ENCODE measurements at regions of chr2 and their contacts with region 1.

Region 1: GRCh38 chr2:70142590-70143313 is 48.1 kb downstream of the C2orf42 start:
- DNase-seq: peak; percentile 99 to 100 (median 100)
- ATAC-seq: peak; percentile 73
- H3K4me3 ChIP-seq: peak overlapping the region; percentile 54 to 56
- H3K4me3 Mint-ChIP-seq: peak overlapping the region; percentile 91
- H3K27ac ChIP-seq: peak overlapping the region; percentile 89 to 97
- H3K27ac Mint-ChIP-seq: peak overlapping the region; percentile 100
- H3K4me1 ChIP-seq: peaks cover 49% of the 10 kb centered on the region
- H3K4me1 Mint-ChIP-seq: peaks cover 53% of the 10 kb centered on the region
- H3K27me3 ChIP-seq: no peaks in the 10 kb centered on the region
- H3K27me3 Mint-ChIP-seq: no peaks in the 10 kb centered on the region
- CTCF ChIP-seq: peak; percentile 89

Region 2: GRCh38 chr2:69829256-69830046 is 313.3 kb before region 1 on chr2 and contains the start of gene GMCL1:
- CTCF ChIA-PET with region 1: no interaction called
- POLR2A ChIA-PET with region 1: no interaction called
- intact Hi-C with region 1: loop called in 1 of 2 experiments (anchors 1 kb)
- DNase-seq: peak; percentile 96 to 100 (median 99)
- ATAC-seq: peak; percentile 94
- H3K4me3 ChIP-seq: peak within 1 kb of the TSS; percentile 70 to 75
- H3K4me3 Mint-ChIP-seq: peak within 1 kb of the TSS; percentile 96
- H3K27ac ChIP-seq: peak within 1 kb of the TSS; percentile 89 to 95
- H3K27ac Mint-ChIP-seq: peak within 1 kb of the TSS; percentile 96
- H3K4me1 ChIP-seq: peaks cover 36% of the 10 kb centered on the region
- H3K4me1 Mint-ChIP-seq: peaks cover 54% of the 10 kb centered on the region
- H3K27me3 ChIP-seq: no peaks in the 10 kb centered on the region
- H3K27me3 Mint-ChIP-seq: no peaks in the 10 kb centered on the region
- CTCF ChIP-seq: no peak
- total RNA-seq, gene GMCL1: 37.1 to 41.4 TPM

Region 3: GRCh38 chr2:70070541-70071268 is 72.0 kb before region 1 on chr2:
- CTCF ChIA-PET with region 1: interaction called, 19 read pairs
- POLR2A ChIA-PET with region 1: interaction called, 15 read pairs
- intact Hi-C with region 1: loop called (anchors 1 kb)
- DNase-seq: peak; percentile 32 to 91 (median 59)
- ATAC-seq: peak; percentile 73
- H3K4me3 ChIP-seq: peak overlapping the region in 1 of 2 experiments; percentile 17
- H3K4me3 Mint-ChIP-seq: peak overlapping the region; percentile 74
- H3K27ac ChIP-seq: peak overlapping the region; percentile 12 to 87
- H3K27ac Mint-ChIP-seq: peak overlapping the region; percentile 97
- H3K4me1 ChIP-seq: peaks cover 42% of the 10 kb centered on the region
- H3K4me1 Mint-ChIP-seq: peaks cover 49% of the 10 kb centered on the region
- H3K27me3 ChIP-seq: no peaks in the 10 kb centered on the region
- H3K27me3 Mint-ChIP-seq: no peaks in the 10 kb centered on the region
- CTCF ChIP-seq: peak; percentile 87

Region 4: GRCh38 chr2:70104231-70105111 is 38.3 kb before region 1 on chr2:
- CTCF ChIA-PET with region 1: interaction called, 3 read pairs
- POLR2A ChIA-PET with region 1: interaction called, 7 read pairs
- intact Hi-C with region 1: loop called (anchors 1 to 5 kb)
- DNase-seq: peak in 3 of 9 experiments; percentile 30 to 61 (median 44)
- ATAC-seq: no peak
- H3K4me3 ChIP-seq: peak overlapping the region; percentile 29 to 44
- H3K4me3 Mint-ChIP-seq: peak overlapping the region; percentile 80
- H3K27ac ChIP-seq: peak overlapping the region; percentile 59 to 85
- H3K27ac Mint-ChIP-seq: peak overlapping the region; percentile 96
- H3K4me1 ChIP-seq: peaks cover 52% of the 10 kb centered on the region
- H3K4me1 Mint-ChIP-seq: peaks cover 50% of the 10 kb centered on the region
- H3K27me3 ChIP-seq: no peaks in the 10 kb centered on the region
- H3K27me3 Mint-ChIP-seq: no peaks in the 10 kb centered on the region
- CTCF ChIP-seq: no peak

Region 5: GRCh38 chr2:70132244-70133126 is 10.3 kb before region 1 on chr2:
- CTCF ChIA-PET with region 1: interaction called, 19 read pairs
- POLR2A ChIA-PET with region 1: interaction called, 183 read pairs
- intact Hi-C with region 1: loop called in 1 of 2 experiments (anchors 1 kb)
- DNase-seq: peak in 6 of 9 experiments; percentile 48 to 78 (median 60)
- ATAC-seq: peak; percentile 53
- H3K4me3 ChIP-seq: peak overlapping the region; percentile 29 to 49
- H3K4me3 Mint-ChIP-seq: peak overlapping the region; percentile 91
- H3K27ac ChIP-seq: peak overlapping the region; percentile 62 to 90
- H3K27ac Mint-ChIP-seq: peak overlapping the region; percentile 98
- H3K4me1 ChIP-seq: peaks cover 74% of the 10 kb centered on the region
- H3K4me1 Mint-ChIP-seq: peaks cover 75% of the 10 kb centered on the region
- H3K27me3 ChIP-seq: no peaks in the 10 kb centered on the region
- H3K27me3 Mint-ChIP-seq: no peaks in the 10 kb centered on the region
- CTCF ChIP-seq: no peak

Region 6: DNA sequence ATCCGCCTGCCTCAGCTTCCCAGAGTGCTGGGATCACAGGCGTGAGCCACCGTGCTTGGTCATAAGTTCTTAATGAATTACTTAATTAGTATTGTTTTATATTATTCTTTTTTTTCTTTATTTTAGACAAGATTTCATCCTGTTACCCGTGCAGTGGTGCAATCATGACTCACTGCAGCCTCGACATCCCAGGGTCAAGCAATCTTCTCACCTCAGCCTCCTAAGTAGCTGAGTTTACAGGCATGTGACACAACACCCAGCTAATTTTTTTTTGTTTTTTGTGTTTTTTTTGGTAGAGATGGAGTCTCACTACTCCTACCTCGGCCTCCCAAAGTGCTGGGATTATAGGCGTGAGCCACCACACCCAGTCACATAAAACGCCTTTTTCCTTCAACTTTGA is 30.8 kb after region 1 on chr2:
- CTCF ChIA-PET with region 1: no interaction called
- POLR2A ChIA-PET with region 1: no interaction called
- intact Hi-C with region 1: no loop called
- DNase-seq: no peak
- ATAC-seq: no peak
- H3K4me3 ChIP-seq: no peak overlapping the region
- H3K4me3 Mint-ChIP-seq: no peak overlapping the region
- H3K27ac ChIP-seq: no peak overlapping the region
- H3K27ac Mint-ChIP-seq: no peak overlapping the region
- H3K4me1 ChIP-seq: no peaks in the 10 kb centered on the region
- H3K4me1 Mint-ChIP-seq: no peaks in the 10 kb centered on the region
- H3K27me3 ChIP-seq: no peaks in the 10 kb centered on the region
- H3K27me3 Mint-ChIP-seq: no peaks in the 10 kb centered on the region
- CTCF ChIP-seq: no peak

Region 7: DNA sequence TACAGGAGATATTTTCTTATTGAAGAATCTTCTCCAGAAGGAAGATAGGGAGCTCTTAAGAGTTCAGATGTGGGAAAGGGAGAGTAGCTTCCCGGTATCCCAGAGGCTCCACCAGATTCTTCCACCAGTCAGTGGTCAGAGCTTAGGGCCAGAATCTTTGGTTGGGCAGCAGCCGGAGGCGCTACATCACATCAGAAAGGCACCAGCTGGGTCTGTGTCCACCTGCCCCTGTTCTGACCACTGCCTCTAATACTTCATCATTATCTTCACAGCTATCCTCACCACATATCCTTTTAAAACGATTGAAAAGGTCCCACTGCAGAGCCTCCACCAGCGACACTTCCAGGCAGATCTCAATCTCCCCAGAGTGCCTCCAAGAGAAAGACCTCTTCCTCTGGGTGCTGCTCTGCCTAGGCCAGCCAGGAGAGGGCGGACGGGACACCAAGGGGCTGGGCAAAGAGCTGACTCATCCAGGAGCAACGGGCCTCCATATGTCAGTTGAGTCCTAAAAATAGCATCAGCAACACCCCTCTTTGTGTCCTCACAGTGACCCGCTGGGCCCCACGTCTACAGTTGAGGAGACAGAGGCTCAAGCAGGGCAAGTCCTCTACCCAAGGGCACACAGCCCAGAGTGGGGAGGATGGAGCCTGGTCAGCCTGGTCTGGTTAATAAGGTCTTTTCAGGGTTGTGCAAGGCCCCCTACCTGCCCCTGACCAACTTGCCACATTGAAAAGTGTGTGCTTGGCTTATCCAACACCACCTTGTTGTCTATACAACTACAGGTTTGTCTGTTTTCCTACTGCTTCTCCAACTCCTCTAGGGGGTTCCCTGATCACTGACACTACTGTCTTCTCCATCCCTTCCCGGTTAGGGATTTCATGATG is 544.1 kb after region 1 on chr2:
- CTCF ChIA-PET with region 1: no interaction called
- POLR2A ChIA-PET with region 1: no interaction called
- intact Hi-C with region 1: no loop called
- DNase-seq: peak in 3 of 9 experiments; percentile 8 to 44 (median 14)
- ATAC-seq: no peak
- H3K4me3 ChIP-seq: no peak overlapping the region
- H3K4me3 Mint-ChIP-seq: no peak overlapping the region
- H3K27ac ChIP-seq: no peak overlapping the region
- H3K27ac Mint-ChIP-seq: no peak overlapping the region
- H3K4me1 ChIP-seq: no peaks in the 10 kb centered on the region
- H3K4me1 Mint-ChIP-seq: no peaks in the 10 kb centered on the region
- H3K27me3 ChIP-seq: no peaks in the 10 kb centered on the region
- H3K27me3 Mint-ChIP-seq: peaks cover 4% of the 10 kb centered on the region
- CTCF ChIP-seq: no peak